ENCODE measurements at regions of chr10 and their contacts with region 1.

Region 1: DNA sequence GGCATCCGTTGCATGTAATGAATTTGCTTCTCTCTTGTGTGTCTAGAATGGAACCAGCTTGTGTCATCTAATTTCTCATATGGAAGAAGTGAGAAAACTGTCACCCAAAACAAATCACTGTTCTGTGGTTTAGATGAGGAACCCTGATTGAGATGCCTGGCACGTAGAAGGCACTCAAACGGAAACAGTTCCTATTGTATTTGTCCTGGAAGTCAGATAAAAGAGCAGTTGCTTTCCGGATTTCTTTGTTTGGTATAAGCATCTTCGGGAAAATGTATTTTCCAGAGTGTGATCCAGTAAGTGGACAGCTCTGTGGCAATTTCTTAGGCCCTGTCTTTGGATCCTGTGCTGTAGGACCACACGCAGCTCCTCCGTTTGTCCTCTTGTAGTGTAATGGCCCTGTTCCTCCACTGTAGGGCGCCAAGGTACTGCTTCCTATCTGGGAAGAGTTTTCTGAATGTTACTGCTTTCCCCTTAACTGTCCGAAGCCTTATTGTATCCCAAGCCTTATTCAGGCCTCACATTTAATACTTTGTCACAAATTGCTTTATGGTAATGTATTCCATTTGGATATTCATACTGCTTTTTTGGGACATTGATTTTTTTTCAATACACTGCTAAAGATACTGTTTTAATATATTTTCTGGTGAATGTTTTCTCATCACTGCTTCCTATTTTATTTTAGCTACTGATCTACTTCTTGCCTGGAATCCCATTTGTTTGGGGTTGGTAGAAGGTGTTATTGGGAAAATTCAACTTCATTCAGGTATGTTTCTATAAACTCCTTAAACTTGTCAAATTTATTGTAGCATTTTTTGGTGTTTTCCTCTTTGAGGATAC is 24.8 kb downstream of the INPP5F start:
- H3K4me3 ChIP-seq: no peak overlapping the region
- H3K27ac ChIP-seq: no peak overlapping the region
- H3K4me1 ChIP-seq: peaks cover 17% of the 10 kb centered on the region
- CTCF ChIP-seq: peak; percentile 77

Region 2: DNA sequence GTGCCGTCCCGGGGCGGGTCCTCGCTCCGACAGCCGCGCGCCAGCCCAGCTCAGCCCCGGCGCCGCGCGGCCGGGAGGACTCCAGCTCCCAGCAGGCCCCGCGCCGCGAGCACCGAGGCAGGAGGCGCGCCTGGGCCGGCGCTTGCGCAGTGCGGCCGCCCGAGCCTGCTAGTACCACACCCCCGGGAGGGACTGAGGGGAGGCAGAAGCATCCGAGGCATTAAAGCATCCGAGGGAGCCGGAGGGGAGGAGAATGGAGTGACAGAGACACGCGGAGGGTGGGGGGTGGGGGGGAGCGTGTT is 543.3 kb before region 1 on chr10 and contains the start of gene GRK5:
- CTCF ChIA-PET with region 1: no interaction called
- POLR2A ChIA-PET with region 1: no interaction called
- H3K4me3 ChIP-seq: peak within 1 kb of the TSS; percentile 73
- H3K27ac ChIP-seq: peak within 1 kb of the TSS; percentile 90
- H3K4me1 ChIP-seq: peaks cover 31% of the 10 kb centered on the region
- CTCF ChIP-seq: no peak

Region 3: DNA sequence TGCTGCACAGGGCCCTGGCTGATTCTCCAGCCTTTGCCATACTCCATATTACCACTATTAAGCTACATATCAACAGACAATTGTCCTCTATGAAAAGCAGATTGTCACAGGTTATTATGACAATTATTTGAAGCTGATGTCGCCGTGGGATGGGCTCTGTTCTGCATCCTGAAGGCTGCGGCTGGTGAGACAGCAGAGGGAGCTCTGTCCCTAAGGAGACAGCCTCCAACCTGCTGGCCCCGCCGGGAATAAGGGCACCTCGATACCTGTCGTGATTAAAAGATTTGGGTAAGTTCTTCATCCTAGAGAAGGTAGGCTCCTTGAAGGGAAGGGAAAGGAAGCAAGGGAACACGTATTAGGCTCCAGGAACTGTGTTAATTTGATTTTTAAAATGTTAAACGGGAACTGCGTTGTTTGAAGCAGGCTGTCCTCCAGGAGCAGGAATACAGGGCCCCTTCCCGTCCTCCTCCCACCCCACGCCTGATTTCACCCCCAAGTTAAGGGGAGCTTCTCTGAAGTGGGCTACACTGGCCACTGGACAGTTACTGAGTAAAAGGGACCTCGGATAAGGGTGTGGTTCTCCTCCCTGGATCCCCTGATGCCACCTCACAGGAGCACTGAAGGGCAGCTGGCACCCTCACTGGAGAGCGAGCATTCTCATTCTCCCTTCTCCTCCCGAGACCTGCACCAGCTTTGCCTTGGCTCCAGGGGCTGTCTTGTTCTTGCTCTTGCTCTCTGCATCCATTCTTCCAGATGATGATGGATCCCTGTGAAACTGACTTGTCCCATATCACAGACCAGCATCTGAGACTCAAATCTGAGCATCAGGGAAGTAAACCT is 142.1 kb before region 1 on chr10:
- CTCF ChIA-PET with region 1: interaction called, 10 read pairs
- POLR2A ChIA-PET with region 1: no interaction called
- H3K4me3 ChIP-seq: no peak overlapping the region
- H3K27ac ChIP-seq: no peak overlapping the region
- H3K4me1 ChIP-seq: no peaks in the 10 kb centered on the region
- CTCF ChIP-seq: peak; percentile 86

Region 4: GRCh38 chr10:119725828-119726675 is 24.6 kb before region 1 on chr10 and contains the start of gene INPP5F:
- CTCF ChIA-PET with region 1: interaction called, 10 read pairs
- POLR2A ChIA-PET with region 1: interaction called, 5 read pairs
- H3K4me3 ChIP-seq: peak within 1 kb of the TSS; percentile 67
- H3K27ac ChIP-seq: peak within 1 kb of the TSS; percentile 85
- H3K4me1 ChIP-seq: peaks cover 16% of the 10 kb centered on the region
- CTCF ChIP-seq: no peak; the same call in 1 of the 2 replicates

Region 5: GRCh38 chr10:119761106-119761505 is 10.5 kb after region 1 on chr10:
- CTCF ChIA-PET with region 1: interaction called, 14 read pairs
- POLR2A ChIA-PET with region 1: no interaction called
- H3K4me3 ChIP-seq: no peak overlapping the region
- H3K27ac ChIP-seq: no peak overlapping the region
- H3K4me1 ChIP-seq: 0 out of 2 replicates have a peak, but pooled peaks cover 4% of the 10 kb centered on the region
- CTCF ChIP-seq: no peak

Region 6: GRCh38 chr10:119811122-119811521 is 60.5 kb after region 1 on chr10:
- CTCF ChIA-PET with region 1: interaction called, 11 read pairs
- POLR2A ChIA-PET with region 1: no interaction called
- H3K4me3 ChIP-seq: no peak overlapping the region
- H3K27ac ChIP-seq: no peak overlapping the region
- H3K4me1 ChIP-seq: peaks cover 7% of the 10 kb centered on the region; the same call in 1 of the 2 replicates
- CTCF ChIP-seq: no peak

Region 7: DNA sequence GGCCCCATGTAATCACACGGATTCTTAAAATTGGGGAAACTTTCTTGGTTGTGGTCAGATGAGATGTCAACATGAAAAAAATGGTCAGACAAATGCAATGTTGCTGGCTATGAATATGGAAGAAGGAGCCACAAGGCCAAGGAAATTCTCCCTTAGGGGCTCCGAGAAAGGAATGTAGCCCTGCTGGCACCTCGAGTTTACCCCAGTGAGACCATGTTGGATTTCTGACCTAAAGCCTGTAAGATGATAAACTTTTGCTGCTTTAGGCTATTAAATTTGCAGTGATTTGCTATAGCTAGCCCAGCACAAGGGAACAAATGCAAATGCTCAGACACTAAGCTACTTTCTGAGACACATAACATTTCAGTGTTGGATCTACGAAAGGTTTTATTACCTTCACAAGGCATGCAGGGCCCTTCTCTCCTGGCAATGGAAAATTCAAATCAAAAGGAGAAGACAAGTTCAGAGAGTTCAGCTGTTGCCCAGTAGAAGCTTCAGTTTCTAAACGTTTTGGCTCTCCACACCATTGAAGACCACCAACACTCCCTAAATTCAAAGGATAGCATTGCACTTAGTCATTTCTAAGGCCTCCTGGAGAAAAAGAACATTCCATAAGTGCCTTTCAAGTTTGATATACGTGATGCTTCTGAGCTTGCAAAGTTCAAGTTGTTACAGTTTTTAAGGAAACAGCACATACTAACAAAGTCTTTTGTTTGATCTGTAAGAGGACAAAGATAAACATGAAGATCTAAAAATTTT is 98.6 kb after region 1 on chr10:
- CTCF ChIA-PET with region 1: interaction called, 11 read pairs
- POLR2A ChIA-PET with region 1: no interaction called
- H3K4me3 ChIP-seq: no peak overlapping the region
- H3K27ac ChIP-seq: no peak overlapping the region
- H3K4me1 ChIP-seq: no peaks in the 10 kb centered on the region
- CTCF ChIP-seq: no peak

Region 8: DNA sequence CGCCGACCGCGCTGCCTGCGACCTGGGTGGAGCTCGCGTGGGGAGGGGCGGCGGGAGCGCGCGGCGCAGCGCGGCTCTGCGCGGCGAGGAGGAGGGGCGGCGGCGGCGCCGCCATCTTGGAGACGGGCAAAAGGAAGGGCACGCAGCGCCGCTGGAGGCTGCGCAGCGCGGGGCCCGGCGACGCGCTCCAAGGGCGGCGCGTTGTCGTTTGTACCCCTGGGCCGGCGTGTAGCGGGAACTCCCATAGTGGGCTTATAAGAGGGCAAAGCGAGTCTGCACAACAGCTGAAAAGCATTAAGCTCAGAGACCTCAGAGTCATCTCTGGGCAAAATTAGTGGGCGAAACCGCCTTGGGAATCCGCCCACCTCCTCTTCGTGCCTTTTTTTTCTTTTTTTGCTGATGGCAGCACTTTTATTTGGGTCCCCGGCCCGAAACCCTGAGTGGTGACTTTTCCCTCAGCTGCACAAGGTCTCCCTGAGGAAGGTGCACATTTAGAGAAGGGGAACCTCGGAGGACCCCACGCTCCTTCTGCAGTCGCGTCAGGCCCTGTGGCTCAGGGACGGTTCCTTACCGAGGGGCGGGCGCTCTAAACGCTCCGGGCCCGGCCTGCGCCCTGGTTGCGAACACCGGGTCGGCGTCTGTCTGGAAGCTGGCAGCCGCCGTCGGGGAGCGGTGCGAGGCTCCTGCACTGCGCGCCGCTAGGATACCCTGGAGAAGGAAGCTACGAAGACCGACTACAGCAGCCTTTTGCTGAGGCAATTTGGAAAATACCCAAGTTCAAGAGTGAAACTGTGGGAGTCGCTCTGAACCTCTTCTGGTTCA is 122.5 kb after region 1 on chr10:
- CTCF ChIA-PET with region 1: interaction called, 14 read pairs
- POLR2A ChIA-PET with region 1: interaction called, 5 read pairs
- H3K4me3 ChIP-seq: peak overlapping the region; percentile 76
- H3K27ac ChIP-seq: peak overlapping the region; percentile 99
- H3K4me1 ChIP-seq: no peaks in the 10 kb centered on the region
- CTCF ChIP-seq: 0 out of 2 replicates have a peak, but pooled peaks have one; percentile 20

Measured in HEK293 (cell line).